Activated CD8-positive, alpha-beta T cell treated with anti-CD3 and anti-CD28 coated beads, Interleukin-2, amount 10 ng/mL, durations not matched to agents 7 days and 5 days (primary cell): ENCODE measurements at regions of chrX and their contacts with region 1.

Region 1: DNA sequence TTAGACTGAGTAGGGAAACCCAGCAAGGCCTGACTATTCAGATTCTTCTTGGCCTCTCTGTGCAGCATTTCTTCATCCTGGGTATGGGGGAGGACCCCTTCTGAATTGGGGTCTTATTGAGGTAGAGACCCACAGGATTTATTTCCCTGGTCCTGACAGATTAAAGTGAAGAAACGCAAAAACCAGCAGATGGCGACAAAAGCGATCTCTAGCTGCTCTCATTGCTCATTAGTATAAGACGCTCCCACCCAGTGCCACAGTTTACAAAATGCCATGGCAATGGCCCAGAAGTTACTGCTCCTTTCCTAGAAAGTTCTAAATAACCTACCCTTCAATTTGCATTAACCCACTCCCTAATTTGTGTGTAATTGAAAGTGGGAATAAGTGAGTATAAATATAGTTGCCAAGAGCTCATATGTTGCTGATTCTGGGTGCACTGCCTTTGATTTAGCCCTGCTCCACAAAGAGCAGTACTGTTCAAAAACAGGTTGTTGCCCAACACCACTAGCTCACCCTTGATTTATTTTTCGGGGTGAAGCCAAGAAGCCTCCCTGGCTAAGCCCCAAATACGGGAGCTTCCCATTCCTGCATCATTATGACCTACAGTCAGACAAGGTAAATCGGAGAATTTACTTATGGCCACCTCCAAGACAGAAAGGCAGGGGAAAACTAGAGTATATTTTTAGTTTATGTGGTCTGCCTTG is 3.7 kb upstream of the BEX4 start:
- DNase-seq: peak; percentile 62
- ATAC-seq: peak; percentile 31
- H3K4me3 Mint-ChIP-seq: no peak overlapping the region
- H3K27ac Mint-ChIP-seq: no peak overlapping the region
- H3K4me1 Mint-ChIP-seq: peaks cover 6% of the 10 kb centered on the region
- H3K27me3 Mint-ChIP-seq: peaks cover 4% of the 10 kb centered on the region

Region 2: GRCh38 chrX:103248553-103248952 is 37.4 kb after region 1 on chrX:
- CTCF ChIA-PET with region 1: interaction called, 19 read pairs
- POLR2A ChIA-PET with region 1: no interaction called
- DNase-seq: peak; percentile 20
- ATAC-seq: no peak
- H3K4me3 Mint-ChIP-seq: no peak overlapping the region
- H3K27ac Mint-ChIP-seq: no peak overlapping the region
- H3K4me1 Mint-ChIP-seq: peaks cover 4% of the 10 kb centered on the region
- H3K27me3 Mint-ChIP-seq: peaks cover 4% of the 10 kb centered on the region